Lower leg skin (tissue), 4 donors: ENCODE measurements at regions of chr2 and their contacts with region 1.

Region 1: DNA sequence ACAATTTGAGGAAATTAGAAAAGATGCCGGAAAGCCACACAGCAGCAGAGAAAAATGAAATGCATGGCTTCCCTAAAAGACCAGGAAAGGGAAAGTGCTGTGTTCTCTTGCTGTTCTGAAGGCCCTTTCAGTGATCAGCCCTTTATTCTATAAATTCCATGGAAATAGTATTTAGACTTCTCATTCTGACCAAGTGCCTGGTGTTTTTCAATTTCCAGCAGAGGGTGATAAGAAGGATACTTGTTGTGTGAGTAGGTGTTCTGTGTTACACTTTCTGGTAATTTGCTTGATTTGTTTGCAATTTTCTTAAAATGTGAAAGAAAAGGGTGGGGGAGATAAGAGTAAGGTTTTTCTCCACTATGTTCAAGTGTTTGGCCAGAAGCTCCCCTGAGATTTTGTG is 504.5 kb downstream of the IRS1 start:
- DNase-seq: no peak
- H3K4me3 ChIP-seq: no peak overlapping the region
- CTCF ChIP-seq: no peak
- POLR2A ChIP-seq: no peak

Region 2: GRCh38 chr2:224585205-224586088 is 1709.7 kb before region 1 on chr2 and contains the start of gene CUL3:
- intact Hi-C with region 1: no loop called
- DNase-seq: peak; percentile 99 to 100
- H3K4me3 ChIP-seq: peak within 1 kb of the TSS; percentile 85
- CTCF ChIP-seq: no peak
- POLR2A ChIP-seq: peak in 1 of 2 donors; percentile 77
- total RNA-seq, gene CUL3: 66.0 to 105 (median 82.6) TPM

Region 3: DNA sequence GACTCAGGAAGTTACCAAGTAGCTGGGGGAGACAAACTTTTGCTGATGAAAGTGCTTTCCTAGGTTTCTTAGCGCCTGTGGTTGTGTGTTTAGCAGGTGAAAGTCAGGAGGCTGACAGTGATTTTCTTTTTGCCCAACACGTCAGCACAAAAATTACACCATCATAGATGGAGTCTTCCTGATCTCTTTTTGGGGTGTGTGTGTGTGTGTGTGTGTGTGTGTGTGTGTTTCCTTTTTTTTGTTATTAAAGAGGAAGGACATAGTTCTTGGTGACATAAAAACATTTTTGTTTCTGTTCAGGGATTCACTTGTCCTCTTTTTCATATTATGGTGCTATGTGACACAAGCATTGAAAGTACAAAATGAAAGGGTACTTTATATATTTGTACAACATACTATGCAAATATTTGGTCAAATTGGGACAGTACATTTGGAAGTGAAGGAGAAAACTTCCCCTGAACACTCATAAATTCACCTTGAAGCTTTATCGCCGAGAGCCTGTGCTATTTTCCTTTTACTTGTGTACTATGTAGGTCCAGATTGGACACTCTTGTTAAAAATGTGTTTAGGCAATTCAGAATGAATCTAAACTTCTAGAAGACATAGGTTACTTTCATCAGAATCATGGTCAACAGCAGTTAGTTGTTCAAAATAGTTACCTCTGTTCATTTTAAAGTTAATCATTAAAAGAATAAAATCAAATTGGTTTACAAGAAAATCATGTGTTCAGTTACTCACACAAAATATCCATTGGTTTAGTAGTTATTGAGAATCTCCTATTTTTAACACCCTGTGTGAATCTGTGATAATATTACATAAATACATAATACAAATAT is 12.6 kb after region 1 on chr2:
- intact Hi-C with region 1: loop called (anchors 2 kb)
- DNase-seq: no peak
- H3K4me3 ChIP-seq: no peak overlapping the region
- CTCF ChIP-seq: no peak
- POLR2A ChIP-seq: no peak